Activated B cell treated with CpG ODN at 0.5 μM for 24 hours (primary cell): ENCODE measurements at regions of chr12 and their contacts with region 1.

Region 1: DNA sequence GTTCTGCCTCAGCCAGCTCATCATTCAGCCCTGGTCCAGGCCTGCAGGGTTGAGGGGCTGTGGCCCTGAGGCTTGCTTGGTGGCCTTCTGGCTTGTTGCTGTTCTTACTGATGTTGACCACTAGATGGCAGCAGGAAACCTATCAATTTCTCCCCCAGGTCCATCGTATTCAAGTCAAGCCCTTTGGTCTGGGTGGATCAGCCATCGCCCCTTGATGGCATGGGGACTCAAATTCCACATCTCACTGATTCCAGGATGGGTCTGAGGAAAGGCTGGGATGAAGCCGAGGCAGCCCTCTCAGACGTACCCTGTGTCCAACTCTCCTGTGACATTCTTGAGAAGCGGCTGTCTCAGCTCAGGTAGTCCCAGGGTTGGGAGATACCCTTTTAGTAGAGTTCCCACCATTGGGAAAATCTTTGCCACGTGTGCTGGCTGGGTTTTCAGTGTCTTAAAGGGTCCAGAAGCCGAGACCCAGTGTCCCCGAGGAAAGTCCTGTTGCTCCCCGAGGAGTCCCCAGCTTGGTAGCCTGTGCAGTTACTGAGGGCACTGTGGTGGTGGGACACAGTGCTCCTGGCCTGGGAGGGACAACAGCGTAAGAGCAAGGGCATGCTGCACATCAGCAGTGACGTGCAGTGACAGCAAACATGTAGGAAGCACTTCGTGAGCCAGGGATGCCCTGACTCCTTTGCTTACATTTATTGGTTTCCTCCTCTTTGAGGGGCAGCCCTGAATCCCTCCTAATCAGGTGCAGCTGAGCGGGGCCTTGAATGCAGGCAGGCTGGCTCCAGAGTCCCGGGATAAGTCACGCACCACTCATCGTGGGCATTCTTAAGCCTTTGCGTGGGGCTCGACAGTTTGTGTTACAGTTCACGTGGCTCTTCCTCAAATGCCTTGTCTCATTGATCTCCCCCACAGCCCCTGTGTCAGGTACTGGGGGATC is 58.6 kb downstream of the TSPAN9 start:
- DNase-seq: no peak
- ATAC-seq: peak; percentile 66
- H3K4me3 Mint-ChIP-seq: no peak overlapping the region
- H3K27ac Mint-ChIP-seq: no peak overlapping the region
- H3K4me1 Mint-ChIP-seq: no peaks in the 10 kb centered on the region
- H3K27me3 Mint-ChIP-seq: peaks cover 46% of the 10 kb centered on the region
- CTCF ChIP-seq: peak; percentile 74

Region 2: DNA sequence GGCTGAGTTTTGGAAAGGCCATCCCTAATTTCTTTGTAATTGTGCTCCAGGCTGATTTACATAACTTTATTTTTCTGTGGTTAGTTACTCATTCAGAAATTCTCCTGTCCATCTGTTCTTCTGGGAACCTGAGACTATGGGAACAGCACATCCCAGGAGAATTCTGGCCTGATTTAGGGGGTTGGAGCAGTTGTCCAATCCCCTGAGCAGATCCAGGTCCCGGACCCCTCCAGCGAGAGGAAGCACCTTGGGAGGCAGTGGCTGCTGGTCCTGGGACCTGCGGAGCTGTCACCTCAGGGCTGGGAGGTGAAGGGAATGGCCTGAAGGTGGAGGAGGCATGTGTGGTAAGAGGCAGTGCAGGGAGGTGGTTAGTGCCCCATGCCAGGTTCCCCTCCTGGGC is 18.2 kb before region 1 on chr12:
- CTCF ChIA-PET with region 1: no interaction called
- POLR2A ChIA-PET with region 1: no interaction called
- intact Hi-C with region 1: no loop called
- DNase-seq: no peak
- ATAC-seq: no peak
- H3K4me3 Mint-ChIP-seq: no peak overlapping the region
- H3K27ac Mint-ChIP-seq: no peak overlapping the region
- H3K4me1 Mint-ChIP-seq: no peaks in the 10 kb centered on the region
- H3K27me3 Mint-ChIP-seq: peaks cover 21% of the 10 kb centered on the region
- CTCF ChIP-seq: no peak

Region 3: GRCh38 chr12:3202734-3203446 is 67.1 kb after region 1 on chr12:
- CTCF ChIA-PET with region 1: interaction called, 4 read pairs
- POLR2A ChIA-PET with region 1: no interaction called
- intact Hi-C with region 1: loop called (anchors 1 kb)
- DNase-seq: peak; percentile 33
- ATAC-seq: peak; percentile 60
- H3K4me3 Mint-ChIP-seq: no peak overlapping the region
- H3K27ac Mint-ChIP-seq: no peak overlapping the region
- H3K4me1 Mint-ChIP-seq: peaks cover 11% of the 10 kb centered on the region
- H3K27me3 Mint-ChIP-seq: peaks cover 53% of the 10 kb centered on the region
- CTCF ChIP-seq: no peak

Region 4: DNA sequence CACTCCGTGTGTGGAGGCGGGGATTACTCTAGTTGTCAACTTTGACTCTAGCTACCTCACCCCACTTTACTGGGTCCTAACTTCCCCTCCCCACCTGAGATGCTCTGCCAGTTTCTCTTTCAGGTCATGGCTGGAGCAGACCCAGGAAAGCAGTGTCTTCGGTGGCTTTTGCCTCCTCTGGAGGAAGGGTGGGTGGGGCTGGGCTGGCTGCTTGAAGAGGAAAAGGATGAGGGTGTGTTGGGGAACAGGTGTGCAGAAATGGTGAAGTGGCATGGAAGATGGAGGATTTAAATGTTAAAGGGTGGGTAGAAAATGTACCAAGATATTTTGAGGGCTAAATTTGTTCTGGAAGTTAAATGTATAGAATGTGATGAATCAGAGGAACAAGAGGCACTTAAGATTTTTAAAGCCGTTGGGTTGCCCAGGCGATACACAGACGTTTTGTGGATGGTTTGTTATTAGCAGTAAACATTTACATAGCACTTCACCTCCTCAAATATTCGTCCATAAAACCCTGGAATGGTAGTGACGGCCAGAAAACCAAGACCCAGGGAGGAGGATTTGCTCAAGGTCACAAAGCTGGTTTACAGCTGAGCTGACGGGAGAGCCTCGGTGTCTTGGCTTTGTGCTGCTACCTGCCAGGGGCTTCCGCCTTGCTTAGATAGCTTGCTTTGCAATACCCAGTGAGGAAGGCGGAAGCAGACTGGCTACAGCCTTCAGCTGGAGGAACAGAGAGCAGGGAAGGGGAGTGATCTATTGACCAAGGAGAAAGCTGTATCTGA is 283.0 kb after region 1 on chr12:
- CTCF ChIA-PET with region 1: no interaction called
- POLR2A ChIA-PET with region 1: no interaction called
- intact Hi-C with region 1: no loop called
- DNase-seq: no peak
- ATAC-seq: no peak
- H3K4me3 Mint-ChIP-seq: no peak overlapping the region
- H3K27ac Mint-ChIP-seq: no peak overlapping the region
- H3K4me1 Mint-ChIP-seq: no peaks in the 10 kb centered on the region
- H3K27me3 Mint-ChIP-seq: peaks cover 20% of the 10 kb centered on the region
- CTCF ChIP-seq: no peak

Region 5: DNA sequence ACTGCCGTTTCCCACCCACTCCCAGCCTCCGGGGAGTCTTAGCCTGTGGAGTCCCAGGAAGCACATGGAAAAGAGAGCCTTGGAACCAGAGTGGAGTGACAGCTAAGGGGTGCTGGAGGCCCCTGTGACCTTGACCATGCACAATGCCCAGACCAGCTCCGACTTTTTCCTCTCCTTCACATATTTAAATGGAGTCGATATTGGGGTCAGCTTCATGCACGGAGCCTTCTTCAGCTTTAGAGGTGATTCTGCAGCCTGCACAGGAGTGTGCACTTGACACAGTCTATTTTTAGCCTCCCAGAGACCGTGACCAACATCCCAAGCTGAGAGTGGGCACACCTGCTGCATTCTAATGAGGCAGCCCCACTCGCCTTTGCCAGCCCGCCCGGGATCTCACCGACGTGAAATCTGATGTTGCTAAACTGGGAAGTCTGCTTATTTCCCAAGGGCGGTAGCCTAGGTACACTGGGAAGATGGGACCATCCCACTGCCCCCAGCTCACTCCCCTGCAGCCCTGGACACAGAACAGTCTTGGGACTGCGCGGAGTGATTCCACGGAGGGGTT is 402.8 kb after region 1 on chr12:
- CTCF ChIA-PET with region 1: no interaction called
- POLR2A ChIA-PET with region 1: no interaction called
- intact Hi-C with region 1: no loop called
- DNase-seq: no peak
- ATAC-seq: no peak
- H3K4me3 Mint-ChIP-seq: no peak overlapping the region
- H3K27ac Mint-ChIP-seq: no peak overlapping the region
- H3K4me1 Mint-ChIP-seq: no peaks in the 10 kb centered on the region
- H3K27me3 Mint-ChIP-seq: peaks cover 8% of the 10 kb centered on the region
- CTCF ChIP-seq: no peak